HEK293T (cell line): ENCODE measurements at regions of chr6 and their contacts with region 1.

Region 1: DNA sequence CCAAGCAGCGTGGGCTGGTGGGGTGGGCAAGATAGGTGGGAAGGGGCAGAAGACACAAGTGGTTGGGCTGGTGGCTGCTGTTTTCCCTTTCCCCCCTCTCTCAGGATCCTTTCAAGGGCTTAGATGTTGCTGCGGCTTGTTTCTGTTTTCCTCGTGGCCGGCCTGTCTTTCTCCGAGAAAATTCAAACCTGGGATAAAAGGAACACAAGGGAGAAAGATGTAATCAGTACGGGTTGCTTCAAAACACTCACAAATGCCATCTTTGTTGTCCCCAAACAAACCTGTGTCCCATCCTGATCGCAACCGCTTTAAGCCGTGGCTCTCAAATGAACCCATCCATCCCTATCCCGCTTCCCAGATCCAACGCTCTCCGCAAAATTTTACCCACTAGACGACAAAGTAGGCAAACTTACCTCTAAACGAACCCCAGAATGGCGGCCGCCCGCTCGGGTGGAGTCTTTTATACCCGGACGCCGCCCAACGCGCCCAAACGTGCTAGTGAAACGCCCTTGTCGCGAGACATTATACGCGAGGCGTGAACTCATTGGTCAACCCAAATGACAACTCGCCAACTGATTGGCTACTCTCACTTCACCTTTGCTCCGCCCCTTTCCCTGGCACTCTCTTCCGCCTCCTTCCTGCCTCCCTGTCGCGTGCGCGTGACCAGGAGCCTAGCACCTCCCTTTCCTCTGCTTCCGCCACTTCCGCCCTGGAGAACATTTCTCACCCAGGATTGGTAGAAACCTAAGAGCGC is at the start of gene PPP1R10:
- DNase-seq: peak; percentile 94

Region 2: GRCh38 chr6:30556066-30556905 is 60.7 kb before region 1 on chr6 and contains the start of gene GNL1:
- CTCF ChIA-PET with region 1: no interaction called
- POLR2A ChIA-PET with region 1: interaction called, 18 read pairs
- DNase-seq: peak; percentile 85

Region 3: GRCh38 chr6:30571075-30571768 is 45.8 kb before region 1 on chr6 and contains the start of gene ABCF1:
- CTCF ChIA-PET with region 1: no interaction called
- POLR2A ChIA-PET with region 1: interaction called, 11 read pairs
- DNase-seq: peak; percentile 99

Region 4: GRCh38 chr6:30600451-30600961 is 16.5 kb before region 1 on chr6:
- CTCF ChIA-PET with region 1: interaction called, 5 read pairs
- POLR2A ChIA-PET with region 1: interaction called, 90 read pairs
- DNase-seq: no peak

Region 5: GRCh38 chr6:30647242-30648116 is 30.5 kb after region 1 on chr6:
- CTCF ChIA-PET with region 1: no interaction called
- POLR2A ChIA-PET with region 1: interaction called, 21 read pairs
- DNase-seq: peak; percentile 82

Region 6: GRCh38 chr6:30672445-30673253 is 55.7 kb after region 1 on chr6 and contains the start of gene DHX16:
- CTCF ChIA-PET with region 1: interaction called, 5 read pairs
- POLR2A ChIA-PET with region 1: interaction called, 10 read pairs
- DNase-seq: peak; percentile 88

Region 7: DNA sequence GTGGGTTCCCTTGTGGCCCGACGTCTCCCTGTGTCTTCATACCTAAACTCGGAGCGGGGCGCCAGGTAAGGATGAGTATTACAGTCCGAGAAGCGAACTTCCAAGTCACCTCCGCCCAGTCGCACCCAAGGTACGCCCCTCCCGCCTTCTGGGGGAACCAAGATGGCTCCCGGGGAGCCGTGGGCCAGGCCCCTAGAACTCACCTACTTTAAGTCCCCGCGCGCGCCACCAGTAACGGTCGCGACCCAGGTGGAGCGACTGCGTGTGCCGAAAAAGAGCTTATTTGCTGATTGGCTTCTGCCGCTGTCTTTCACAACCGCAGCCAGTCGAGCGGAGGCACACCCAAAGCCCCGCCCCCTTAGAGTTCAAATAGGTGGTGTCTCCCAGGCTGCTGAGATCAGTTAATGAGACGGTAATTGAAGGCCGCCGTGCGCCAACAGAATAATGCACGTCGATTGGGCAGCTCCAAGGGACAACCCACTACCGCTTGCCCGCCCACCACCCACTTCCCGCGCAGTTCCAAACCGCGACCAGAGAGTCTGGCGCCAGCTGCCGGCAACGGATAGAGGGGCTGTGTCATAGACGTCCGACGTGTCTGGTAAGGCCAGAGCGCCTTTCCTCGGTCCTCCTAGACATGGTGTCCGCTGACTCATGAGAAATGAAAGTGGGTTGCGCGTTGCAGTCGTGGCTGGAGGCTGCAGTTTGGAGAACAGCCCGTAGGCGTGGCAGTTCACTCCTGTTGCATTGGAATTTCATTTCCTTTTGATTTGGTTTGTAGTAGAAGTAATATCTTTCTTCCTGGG is 100.3 kb after region 1 on chr6 and contains the start of gene MDC1:
- CTCF ChIA-PET with region 1: no interaction called
- POLR2A ChIA-PET with region 1: interaction called, 14 read pairs
- DNase-seq: peak; percentile 94

Region 8: DNA sequence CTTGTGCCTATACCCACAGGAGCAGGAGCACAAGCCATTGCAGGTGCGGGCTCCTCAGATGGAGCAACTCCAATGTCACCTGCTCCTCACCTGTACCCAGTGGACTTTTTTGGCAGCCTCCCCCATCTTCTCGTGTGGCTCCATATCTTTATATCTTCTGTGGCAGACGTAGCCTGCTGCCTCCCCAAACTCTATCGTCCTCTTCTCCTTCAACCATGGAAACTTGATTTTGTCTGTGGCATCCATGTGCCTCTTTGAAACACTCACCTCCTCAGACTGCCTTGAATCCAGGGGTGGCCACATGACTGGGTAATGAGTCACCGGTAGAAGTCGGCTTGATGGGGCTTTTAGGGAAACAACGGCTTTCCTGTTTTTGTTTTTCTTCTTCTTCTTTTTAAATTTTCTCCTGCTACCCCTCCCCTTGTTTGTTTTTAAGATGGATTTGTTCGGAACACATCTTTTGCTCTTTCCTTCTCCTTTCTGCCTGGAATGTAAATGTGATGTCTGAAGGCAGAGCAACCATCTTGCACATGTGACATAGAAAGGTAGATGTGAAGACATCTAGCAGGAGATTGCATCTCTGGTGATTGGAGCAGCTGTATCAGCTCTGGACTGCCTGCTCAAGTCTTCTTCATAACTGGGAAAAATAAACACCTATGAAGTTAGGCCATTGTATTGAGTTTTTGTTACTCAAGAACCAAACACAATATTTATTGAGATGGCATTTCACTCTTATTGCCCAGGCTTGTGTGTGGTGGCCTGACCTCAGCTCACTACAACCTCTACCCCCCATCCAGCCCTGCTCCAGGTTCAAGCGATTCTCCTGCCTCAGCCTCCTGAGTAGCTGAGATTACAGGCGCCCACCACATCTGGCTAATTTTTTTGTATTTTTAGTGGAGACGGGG is 197.4 kb after region 1 on chr6:
- CTCF ChIA-PET with region 1: no interaction called
- POLR2A ChIA-PET with region 1: no interaction called
- DNase-seq: no peak